ENCODE measurements at regions of chr3 and their contacts with region 1.

Region 1: DNA sequence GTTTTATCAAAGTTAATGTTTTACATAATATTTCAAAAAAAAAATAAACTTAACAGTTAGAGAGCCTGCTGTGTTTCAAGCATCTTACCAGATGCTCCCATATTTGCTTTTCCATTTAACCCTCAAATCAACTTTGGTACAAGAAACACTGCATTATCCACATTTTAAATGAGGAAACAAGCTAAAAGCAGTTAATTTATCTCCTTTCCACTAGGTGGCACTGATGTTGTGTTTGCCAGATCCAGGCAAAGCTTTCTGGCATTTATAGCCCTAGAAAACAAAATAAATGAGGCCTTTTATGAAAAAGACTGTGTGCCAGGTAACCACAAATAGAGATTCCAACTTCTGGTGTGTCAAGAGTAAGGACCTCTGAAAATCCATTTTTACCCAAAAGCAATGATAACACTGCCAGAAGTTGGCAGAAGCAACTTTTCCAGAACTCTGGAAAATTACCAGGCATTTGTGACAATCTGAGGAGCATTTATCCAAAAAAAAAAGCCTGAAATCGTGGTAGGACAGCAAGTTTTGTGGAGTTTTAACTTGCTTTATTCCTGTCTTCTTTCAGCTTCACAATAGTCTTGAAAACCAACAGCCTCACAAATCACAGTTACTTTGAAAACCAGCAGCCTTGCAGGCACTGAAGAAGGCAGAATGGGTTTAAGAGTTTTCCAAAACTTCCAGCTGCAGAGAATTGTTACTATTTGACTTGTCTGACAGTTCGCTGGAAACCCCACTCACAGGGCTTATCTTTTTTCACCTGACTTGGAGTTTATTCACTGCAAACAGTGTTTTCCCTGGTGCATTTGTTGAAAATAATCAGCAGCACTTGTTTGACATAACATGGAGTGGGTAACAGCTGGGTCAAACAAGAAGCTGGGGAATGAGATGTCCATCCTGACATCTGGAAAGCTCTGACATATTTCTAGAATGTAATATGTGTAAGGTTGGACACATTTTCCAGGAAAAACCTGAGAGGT is 9.2 kb downstream of the FAM162A start:
- DNase-seq: peak; percentile 61 to 79 (median 79)
- H3K4me3 ChIP-seq: no peak overlapping the region
- H3K27ac ChIP-seq: no peak overlapping the region
- H3K4me1 ChIP-seq: peaks cover 0 to 10% (median 2%) of the 10 kb centered on the region in 4 experiments
- H3K27me3 ChIP-seq: no peaks in the 10 kb centered on the region

Region 2: GRCh38 chr3:122365073-122365472 is 28.1 kb before region 1 on chr3:
- CTCF ChIA-PET with region 1: no interaction called
- POLR2A ChIA-PET with region 1: no interaction called
- DNase-seq: no peak
- H3K4me3 ChIP-seq: no peak overlapping the region
- H3K27ac ChIP-seq: no peak overlapping the region
- H3K4me1 ChIP-seq: no peaks in the 10 kb centered on the region
- H3K27me3 ChIP-seq: no peaks in the 10 kb centered on the region

Region 3: GRCh38 chr3:122403489-122403888 is 10.3 kb after region 1 on chr3:
- CTCF ChIA-PET with region 1: interaction called, 14 read pairs
- POLR2A ChIA-PET with region 1: no interaction called
- DNase-seq: no peak
- H3K4me3 ChIP-seq: no peak overlapping the region
- H3K27ac ChIP-seq: no peak overlapping the region
- H3K4me1 ChIP-seq: no peaks in the 10 kb centered on the region
- H3K27me3 ChIP-seq: no peaks in the 10 kb centered on the region

Region 4: DNA sequence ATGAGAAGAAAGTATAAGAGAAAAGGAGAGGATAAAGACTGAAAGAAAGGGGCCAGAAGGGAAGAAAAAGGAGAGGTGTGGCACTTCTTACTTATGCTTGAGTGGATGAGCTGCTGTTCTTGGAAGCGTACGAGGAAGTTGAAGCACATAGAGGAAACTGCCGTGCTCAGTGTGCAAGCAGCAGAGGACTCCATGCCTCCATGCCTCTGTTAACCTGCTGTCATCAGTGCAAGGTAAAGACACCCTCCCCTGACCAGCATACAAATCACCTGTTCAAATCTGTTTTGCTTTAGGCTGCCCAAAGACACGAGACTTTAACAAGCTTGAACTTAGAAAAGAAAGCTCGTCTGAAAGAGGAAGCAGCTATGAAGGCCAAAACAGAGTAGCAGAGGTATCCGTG is 16.3 kb after region 1 on chr3:
- CTCF ChIA-PET with region 1: interaction called, 14 read pairs
- POLR2A ChIA-PET with region 1: no interaction called
- DNase-seq: peak; percentile 17 to 48 (median 39)
- H3K4me3 ChIP-seq: peak overlapping the region in 5 of 7 experiments; percentile 29 to 68 (median 54)
- H3K27ac ChIP-seq: peak overlapping the region; percentile 20 to 58
- H3K4me1 ChIP-seq: peaks cover 8 to 23% (median 10%) of the 10 kb centered on the region in 4 experiments
- H3K27me3 ChIP-seq: no peaks in the 10 kb centered on the region